Activated CD4-positive, alpha-beta T cell treated with anti-CD3 and anti-CD28 coated beads, Interleukin-2, amount 10 ng/mL, durations not matched to agents 24 days and 14 days (primary cell): ENCODE measurements at regions of chr6 and their contacts with region 1.

Region 1: GRCh38 chr6:125888989-125889656 is 67.4 kb upstream of the HINT3 start:
- DNase-seq: peak; percentile 75
- H3K4me3 Mint-ChIP-seq: no peak overlapping the region
- H3K27ac Mint-ChIP-seq: no peak overlapping the region
- H3K4me1 Mint-ChIP-seq: peaks cover 5% of the 10 kb centered on the region
- H3K27me3 Mint-ChIP-seq: no peaks in the 10 kb centered on the region

Region 2: GRCh38 chr6:125872259-125872921 is 16.7 kb before region 1 on chr6:
- intact Hi-C with region 1: loop called (anchors 2 kb)
- DNase-seq: no peak
- H3K4me3 Mint-ChIP-seq: no peak overlapping the region
- H3K27ac Mint-ChIP-seq: no peak overlapping the region
- H3K4me1 Mint-ChIP-seq: peaks cover 3% of the 10 kb centered on the region
- H3K27me3 Mint-ChIP-seq: no peaks in the 10 kb centered on the region

Region 3: GRCh38 chr6:127690092-127690491 is 1801.0 kb after region 1 on chr6:
- intact Hi-C with region 1: no loop called
- DNase-seq: no peak
- H3K4me3 Mint-ChIP-seq: no peak overlapping the region
- H3K27ac Mint-ChIP-seq: no peak overlapping the region
- H3K4me1 Mint-ChIP-seq: no peaks in the 10 kb centered on the region
- H3K27me3 Mint-ChIP-seq: no peaks in the 10 kb centered on the region